ENCODE measurements at regions of chr22 and their contacts with region 1.

Region 1: GRCh38 chr22:40922484-40923303 is 28.5 kb upstream of the RBX1 start:
- DNase-seq: peak; percentile 76
- ATAC-seq: peak; percentile 51; the same call in 1 of the 2 replicates
- H3K4me3 ChIP-seq: no peak overlapping the region
- H3K27ac ChIP-seq: no peak overlapping the region
- H3K4me1 ChIP-seq: no peaks in the 10 kb centered on the region
- H3K27me3 ChIP-seq: no peaks in the 10 kb centered on the region
- CTCF ChIP-seq: peak; percentile 62

Region 2: DNA sequence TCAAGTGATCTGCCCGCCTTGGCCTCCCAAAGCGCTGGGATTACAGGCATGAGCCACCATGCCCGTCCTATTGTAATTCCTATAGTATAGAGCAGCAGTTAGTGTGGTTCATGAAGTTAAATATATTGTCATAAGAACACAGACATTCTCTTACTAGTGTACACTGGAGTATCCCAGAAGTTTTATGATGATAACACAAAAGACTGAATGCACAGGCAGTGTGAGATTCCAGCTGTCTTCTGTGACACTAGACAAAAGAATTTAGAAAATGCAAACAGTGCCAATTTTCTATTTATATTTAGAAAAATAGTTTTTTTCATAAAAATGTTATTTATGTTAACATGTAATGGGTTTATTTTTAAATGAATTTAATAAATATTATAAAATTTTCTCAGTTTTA is 10.9 kb before region 1 on chr22:
- CTCF ChIA-PET with region 1: interaction called, 10 read pairs
- POLR2A ChIA-PET with region 1: no interaction called
- intact Hi-C with region 1: no loop called
- DNase-seq: no peak
- ATAC-seq: no peak
- H3K4me3 ChIP-seq: no peak overlapping the region
- H3K27ac ChIP-seq: no peak overlapping the region
- H3K4me1 ChIP-seq: no peaks in the 10 kb centered on the region
- H3K27me3 ChIP-seq: no peaks in the 10 kb centered on the region
- CTCF ChIP-seq: no peak

Region 3: GRCh38 chr22:40939202-40939601 is 16.5 kb after region 1 on chr22:
- CTCF ChIA-PET with region 1: no interaction called
- POLR2A ChIA-PET with region 1: interaction called, 12 read pairs
- intact Hi-C with region 1: no loop called
- DNase-seq: no peak
- ATAC-seq: no peak
- H3K4me3 ChIP-seq: no peak overlapping the region
- H3K27ac ChIP-seq: no peak overlapping the region
- H3K4me1 ChIP-seq: no peaks in the 10 kb centered on the region
- H3K27me3 ChIP-seq: no peaks in the 10 kb centered on the region
- CTCF ChIP-seq: no peak

Region 4: DNA sequence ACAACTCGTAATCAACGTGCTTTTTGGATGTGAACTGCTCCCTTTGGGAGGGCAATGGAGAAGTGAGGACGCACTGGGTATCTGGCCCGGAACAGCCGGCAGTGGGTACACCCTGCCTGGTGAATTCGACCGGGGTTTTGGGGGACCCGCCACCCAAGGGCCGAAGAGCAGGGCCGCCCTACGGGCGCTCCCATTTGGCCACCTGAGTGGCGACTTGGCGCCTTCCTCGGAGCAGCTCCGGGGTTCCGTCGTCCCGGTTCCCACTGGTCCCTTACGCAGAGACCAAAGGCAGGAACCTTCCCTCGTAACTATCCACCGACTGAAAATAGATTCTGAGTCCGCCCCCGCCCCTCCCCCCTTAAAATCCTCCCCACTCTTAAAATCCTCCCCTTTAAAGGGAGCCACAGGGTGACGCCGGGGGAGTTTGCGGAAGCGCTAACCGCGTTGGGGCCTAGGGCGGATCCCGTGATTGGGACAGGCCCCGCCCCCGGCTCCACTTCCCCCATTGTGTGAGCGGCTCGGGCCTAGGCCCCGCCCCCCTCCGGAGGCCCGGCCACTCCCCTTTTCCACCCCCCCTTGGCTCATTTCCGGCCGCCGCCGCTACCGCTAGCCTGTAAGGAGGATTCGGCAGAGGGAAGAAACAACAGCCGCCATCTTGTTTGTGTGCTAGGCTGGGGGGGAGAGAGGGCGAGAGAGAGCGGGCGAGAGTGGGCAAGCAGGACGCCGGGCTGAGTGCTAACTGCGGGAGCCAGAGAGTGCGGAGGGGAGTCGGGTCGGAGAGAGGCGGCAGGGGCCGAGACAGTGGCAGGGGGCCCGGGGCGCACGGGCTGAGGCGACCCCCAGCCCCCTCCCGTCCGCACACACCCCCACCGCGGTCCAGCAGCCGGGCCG is 168.7 kb after region 1 on chr22:
- CTCF ChIA-PET with region 1: interaction called, 4 read pairs
- POLR2A ChIA-PET with region 1: no interaction called
- intact Hi-C with region 1: loop called (anchors 10 kb)
- DNase-seq: peak; percentile 95
- ATAC-seq: peak; percentile 89
- H3K4me3 ChIP-seq: peak overlapping the region; percentile 92
- H3K27ac ChIP-seq: peak overlapping the region; percentile 94
- H3K4me1 ChIP-seq: peaks cover 7% of the 10 kb centered on the region
- H3K27me3 ChIP-seq: no peaks in the 10 kb centered on the region
- CTCF ChIP-seq: no peak

Region 5: DNA sequence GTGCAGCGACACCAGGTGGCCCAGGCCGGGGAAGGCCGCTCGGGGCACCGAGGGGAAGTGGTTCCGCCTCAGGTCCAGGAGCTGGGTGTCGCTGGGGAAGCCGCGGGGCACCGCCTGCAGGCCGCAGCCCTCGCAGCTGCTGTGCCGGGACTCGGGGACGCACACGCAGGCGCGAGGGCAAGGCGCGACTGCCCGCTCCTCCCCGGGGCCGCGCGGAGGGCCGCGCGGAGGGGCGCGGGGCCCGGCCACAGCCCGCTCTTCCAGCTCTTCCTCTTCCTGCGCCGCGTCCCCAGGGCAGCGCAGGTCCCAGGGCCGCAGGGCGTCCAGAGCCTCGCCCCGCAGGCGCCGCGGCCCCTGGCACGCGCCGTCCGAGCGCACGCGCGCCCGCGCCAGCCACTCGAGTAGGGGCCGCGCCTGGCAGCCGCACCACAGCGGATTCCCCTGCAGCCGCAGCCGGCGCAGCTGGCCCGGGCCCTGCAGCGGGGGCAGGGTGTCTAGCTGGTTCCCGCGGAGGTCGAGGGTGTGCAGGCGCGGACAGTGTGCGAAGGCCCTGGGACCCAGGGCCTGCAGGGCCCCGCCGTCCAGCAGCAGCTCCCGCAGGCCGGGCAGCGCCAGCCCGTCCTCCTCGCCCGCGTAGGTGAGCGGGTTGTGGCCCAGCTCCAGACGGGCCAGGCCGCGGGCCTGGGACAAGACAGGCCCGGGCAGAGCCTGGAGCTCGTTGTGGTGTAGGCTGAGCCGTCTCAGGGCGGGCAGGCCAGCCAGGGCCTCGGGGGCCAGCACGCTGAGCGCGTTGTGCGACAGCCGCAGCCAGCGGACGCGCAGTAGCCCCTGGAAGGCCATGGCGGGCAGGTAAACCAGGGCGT is 315.2 kb after region 1 on chr22:
- CTCF ChIA-PET with region 1: interaction called, 13 read pairs
- POLR2A ChIA-PET with region 1: no interaction called
- intact Hi-C with region 1: no loop called
- DNase-seq: peak; percentile 71
- ATAC-seq: peak; percentile 80
- H3K4me3 ChIP-seq: peak overlapping the region; percentile 57
- H3K27ac ChIP-seq: no peak overlapping the region
- H3K4me1 ChIP-seq: 0 out of 2 replicates have a peak, but pooled peaks cover 3% of the 10 kb centered on the region
- H3K27me3 ChIP-seq: no peaks in the 10 kb centered on the region
- CTCF ChIP-seq: peak; percentile 60; the same call in 1 of the 2 replicates

Measured in PC-3 (cell line).